HEK293T (cell line): ENCODE measurements at regions of chr17 and their contacts with region 1.

Region 1: GRCh38 chr17:48997083-48997826 is at the start of gene IGF2BP1:
- DNase-seq: peak; percentile 65

Region 2: DNA sequence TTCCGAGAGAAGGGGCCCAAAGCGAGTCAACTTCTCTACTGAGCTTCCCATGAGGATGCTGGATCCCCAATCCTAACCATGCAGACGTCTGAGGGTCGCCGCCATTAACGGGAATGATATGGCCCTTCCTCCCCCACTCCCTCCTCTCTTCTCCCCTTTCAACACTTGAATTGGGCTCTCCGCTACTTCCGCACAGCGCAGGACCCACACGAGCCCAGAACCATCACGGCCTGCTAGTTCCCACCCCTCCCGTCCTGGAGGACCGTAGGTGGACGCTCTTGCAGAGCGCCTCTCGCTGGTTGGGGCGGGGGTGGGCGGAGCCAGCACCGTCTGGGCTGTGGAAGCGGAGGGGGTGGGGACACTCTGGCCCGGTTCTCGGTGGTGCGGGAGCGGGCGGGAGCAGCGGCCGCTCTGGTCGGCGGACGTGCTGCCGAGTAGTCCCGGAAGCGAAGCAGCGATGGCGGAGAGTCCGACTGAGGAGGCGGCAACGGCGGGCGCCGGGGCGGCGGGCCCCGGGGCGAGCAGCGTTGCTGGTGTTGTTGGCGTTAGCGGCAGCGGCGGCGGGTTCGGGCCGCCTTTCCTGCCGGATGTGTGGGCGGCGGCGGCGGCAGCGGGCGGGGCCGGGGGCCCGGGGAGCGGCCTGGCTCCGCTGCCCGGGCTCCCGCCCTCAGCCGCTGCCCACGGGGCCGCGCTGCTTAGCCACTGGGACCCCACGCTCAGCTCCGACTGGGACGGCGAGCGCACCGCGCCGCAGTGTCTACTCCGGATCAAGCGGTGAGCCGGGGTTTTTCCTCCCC is 89.0 kb before region 1 on chr17 and contains the start of gene UBE2Z:
- CTCF ChIA-PET with region 1: no interaction called
- POLR2A ChIA-PET with region 1: interaction called, 10 read pairs
- DNase-seq: peak; percentile 95

Region 3: GRCh38 chr17:48954300-48954755 is 42.9 kb before region 1 on chr17:
- CTCF ChIA-PET with region 1: interaction called, 9 read pairs
- POLR2A ChIA-PET with region 1: interaction called, 47 read pairs
- DNase-seq: peak; percentile 58

Region 4: DNA sequence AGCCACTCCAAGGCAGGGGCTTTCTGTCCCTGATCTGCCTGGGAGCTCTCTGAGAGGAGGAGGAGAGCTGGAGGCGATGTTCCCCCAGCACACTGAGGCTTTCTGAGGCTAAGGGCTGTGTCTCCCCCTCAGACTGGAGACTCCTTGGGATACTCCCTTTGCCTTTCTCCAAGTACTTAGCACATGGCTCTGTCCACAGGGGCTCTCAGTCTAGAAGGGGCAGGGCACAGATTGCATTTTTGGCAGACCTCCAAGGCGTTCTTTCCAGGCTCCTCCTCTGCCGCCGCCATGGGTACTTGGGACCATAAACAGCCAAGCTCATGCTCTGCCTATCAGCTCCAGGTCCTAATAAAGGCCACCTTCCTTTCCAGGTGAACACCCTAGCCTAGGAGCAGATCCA is 27.0 kb before region 1 on chr17:
- CTCF ChIA-PET with region 1: interaction called, 5 read pairs
- POLR2A ChIA-PET with region 1: interaction called, 73 read pairs
- DNase-seq: peak; percentile 61

Region 5: DNA sequence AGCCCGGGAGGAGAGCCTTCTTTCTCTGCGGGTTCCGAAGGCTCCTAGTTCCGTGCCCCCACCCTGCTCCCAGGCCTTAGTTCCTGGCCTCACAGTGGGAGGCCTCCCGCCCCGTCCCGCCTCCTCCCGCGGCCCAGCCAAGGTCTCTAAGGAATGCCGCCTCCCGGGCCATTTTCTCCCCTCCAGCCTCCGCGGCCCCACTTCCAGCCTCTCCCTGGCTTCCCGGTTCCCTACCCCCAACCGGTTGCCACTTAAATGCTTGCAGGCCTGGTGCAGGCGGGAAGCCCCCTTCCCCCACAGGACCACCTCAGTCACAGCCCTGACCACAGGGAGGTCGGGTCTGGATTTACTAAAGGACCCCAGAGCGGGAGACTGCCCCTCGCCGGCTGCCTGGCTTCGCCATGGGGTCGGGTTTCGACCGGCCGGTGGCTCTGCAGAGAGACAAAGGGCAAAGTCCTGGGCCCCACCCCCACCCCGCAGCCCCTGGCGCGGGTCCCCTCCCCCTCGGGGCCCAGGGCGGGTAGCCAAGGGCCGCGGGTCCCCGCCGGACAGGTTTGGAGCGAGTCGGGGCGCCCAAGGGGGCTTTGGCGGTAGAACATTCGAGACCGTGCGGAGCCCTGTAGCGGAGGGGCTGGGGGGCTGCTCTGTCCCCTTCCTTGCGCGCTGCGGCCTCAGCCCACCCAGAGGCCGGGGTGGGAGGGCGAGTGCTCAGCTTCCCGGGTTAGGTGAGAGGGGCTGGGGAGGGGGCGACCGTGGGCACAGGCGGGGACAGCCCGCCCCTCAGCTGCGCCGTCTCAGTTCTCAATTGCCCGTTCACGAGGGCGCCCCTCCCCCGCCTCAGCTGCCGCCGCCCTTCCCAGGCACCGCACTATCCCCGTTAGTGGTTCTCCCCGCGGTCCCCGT is 16.3 kb after region 1 on chr17:
- CTCF ChIA-PET with region 1: no interaction called
- POLR2A ChIA-PET with region 1: interaction called, 16 read pairs
- DNase-seq: no peak